Caco-2 (cell line): ENCODE measurements at regions of chr2 and their contacts with region 1.

Region 1: DNA sequence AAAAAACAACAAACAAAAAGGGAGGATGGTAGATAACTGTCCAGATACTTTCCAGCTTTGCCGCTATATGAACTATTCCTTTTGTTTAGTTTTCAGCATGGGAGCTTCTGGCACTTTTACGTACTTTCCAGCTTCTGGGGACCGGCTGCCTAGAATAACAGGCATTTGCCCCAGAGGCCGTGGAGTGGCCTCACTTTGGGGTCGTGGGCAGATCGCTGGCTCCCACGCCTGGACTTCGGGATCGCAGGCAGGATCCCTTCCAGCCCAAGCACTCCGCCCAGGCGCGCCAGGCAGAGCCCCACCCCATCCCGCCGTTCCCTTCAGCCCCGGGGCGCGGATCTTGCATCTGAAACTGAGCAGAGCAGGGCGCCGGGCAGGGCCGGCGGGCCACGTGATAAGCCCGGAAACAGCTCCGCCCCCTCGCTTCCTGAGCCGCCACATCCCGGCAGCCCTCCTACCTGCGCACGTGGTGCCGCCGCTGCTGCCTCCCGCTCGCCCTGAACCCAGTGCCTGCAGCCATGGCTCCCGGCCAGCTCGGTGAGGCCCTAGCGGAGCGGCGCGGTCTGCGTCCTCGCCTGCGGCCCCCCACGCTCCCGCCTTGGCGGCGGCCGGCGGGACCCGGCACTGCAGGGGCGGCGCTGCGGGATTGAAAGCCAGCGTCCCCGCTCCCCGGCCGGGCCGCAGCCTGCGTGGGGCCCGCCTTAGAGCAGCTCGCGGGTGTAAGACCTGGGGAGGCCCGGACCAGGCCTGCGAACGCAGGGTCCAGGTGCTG is at the start of gene ATIC:
- DNase-seq: peak; percentile 97
- H3K4me3 ChIP-seq: peak within 1 kb of the TSS; percentile 57
- H3K4me3 Mint-ChIP-seq: peak within 1 kb of the TSS; percentile 87
- H3K27ac Mint-ChIP-seq: peak within 1 kb of the TSS; percentile 83
- H3K4me1 ChIP-seq: peaks cover 25% of the 10 kb centered on the region
- H3K4me1 Mint-ChIP-seq: peaks cover 23% of the 10 kb centered on the region
- H3K27me3 ChIP-seq: no peaks in the 10 kb centered on the region
- H3K27me3 Mint-ChIP-seq: no peaks in the 10 kb centered on the region
- CTCF ChIP-seq: no peak
- total RNA-seq, gene ATIC: 318 and 325 TPM in 2 replicates

Region 2: DNA sequence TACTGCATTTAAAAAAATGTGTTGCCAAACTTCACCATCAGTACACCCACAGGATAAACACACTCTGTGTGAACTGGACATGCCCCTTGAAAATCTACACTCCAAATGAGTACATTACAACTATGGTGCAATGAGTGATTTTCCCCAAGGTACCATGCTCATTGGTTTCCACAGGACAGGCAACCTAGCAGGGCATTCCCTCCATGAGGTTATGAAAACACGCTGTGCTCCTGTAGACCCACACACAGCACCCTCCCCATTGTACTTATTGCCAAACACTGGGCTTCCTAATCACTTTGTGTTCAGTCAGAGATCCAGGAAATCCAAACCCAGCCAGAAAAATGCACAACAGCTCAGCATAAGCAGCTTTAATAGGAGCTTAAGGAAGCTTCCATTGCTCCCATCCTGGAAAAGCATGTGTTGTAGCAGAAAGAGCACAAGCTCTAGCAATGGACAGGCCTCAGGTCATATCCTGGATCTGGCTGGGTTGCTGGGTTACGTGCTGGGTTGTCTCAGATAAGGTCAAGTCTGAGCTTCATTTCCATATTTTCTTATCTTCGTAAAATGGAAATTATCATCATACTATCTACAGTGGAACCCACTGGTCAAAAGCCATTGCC is 20.7 kb before region 1 on chr2:
- CTCF ChIA-PET with region 1: no interaction called
- POLR2A ChIA-PET with region 1: no interaction called
- intact Hi-C with region 1: no loop called
- DNase-seq: no peak
- H3K4me3 ChIP-seq: no peak overlapping the region
- H3K4me3 Mint-ChIP-seq: no peak overlapping the region
- H3K27ac Mint-ChIP-seq: no peak overlapping the region
- H3K4me1 ChIP-seq: no peaks in the 10 kb centered on the region
- H3K4me1 Mint-ChIP-seq: no peaks in the 10 kb centered on the region
- H3K27me3 ChIP-seq: no peaks in the 10 kb centered on the region
- H3K27me3 Mint-ChIP-seq: no peaks in the 10 kb centered on the region
- CTCF ChIP-seq: no peak

Region 3: GRCh38 chr2:215332872-215333595 is 21.2 kb after region 1 on chr2:
- CTCF ChIA-PET with region 1: interaction called, 4 read pairs
- POLR2A ChIA-PET with region 1: no interaction called
- intact Hi-C with region 1: loop called (anchors 1 kb)
- DNase-seq: peak; percentile 48 to 54
- H3K4me3 ChIP-seq: no peak overlapping the region
- H3K4me3 Mint-ChIP-seq: peak overlapping the region; percentile 6
- H3K27ac Mint-ChIP-seq: peak overlapping the region; percentile 3
- H3K4me1 ChIP-seq: peaks cover 28% of the 10 kb centered on the region
- H3K4me1 Mint-ChIP-seq: peaks cover 23% of the 10 kb centered on the region
- H3K27me3 ChIP-seq: no peaks in the 10 kb centered on the region
- H3K27me3 Mint-ChIP-seq: no peaks in the 10 kb centered on the region
- CTCF ChIP-seq: no peak

Region 4: DNA sequence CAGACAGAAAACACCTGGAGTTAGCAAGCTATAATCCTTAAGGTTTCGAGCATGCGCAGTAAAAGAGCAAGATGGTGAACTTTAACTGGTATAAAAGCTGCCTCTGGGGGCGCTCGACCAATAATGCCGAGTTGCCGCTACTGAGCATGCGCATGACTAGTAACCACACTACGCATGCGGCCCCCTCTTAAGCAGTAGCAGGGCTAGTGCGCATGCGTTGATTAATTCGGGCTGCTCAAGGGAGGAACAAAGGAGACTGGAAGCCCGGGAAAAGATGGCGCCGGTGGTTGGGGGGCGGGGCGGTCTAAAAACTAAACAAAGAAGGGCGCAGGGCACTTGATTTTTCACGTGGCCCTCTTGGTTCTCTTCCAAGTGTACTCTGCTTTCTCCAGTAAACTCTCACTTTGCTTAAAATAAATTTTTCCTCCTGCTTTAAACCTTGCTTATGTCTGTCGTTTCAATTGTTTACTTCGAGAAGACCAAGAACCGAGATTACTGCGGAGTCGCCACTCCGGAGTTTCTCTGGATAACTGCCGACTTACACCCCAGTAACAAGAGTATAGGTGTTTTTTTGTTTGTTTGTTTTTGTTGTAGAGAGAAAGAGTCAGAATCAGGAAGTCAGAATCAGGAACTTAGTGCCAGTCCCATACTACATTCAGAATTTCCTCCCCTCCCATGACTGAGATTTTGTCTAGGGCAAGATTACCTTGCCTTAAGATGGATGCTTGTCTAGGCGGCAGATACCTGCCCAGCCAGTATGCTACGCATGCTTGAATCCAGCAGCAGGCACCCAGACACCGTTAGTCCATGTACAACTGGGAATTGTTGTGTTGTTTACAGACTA is 803.1 kb after region 1 on chr2:
- CTCF ChIA-PET with region 1: no interaction called
- POLR2A ChIA-PET with region 1: no interaction called
- intact Hi-C with region 1: loop called (anchors 5 kb)
- DNase-seq: peak; percentile 98 to 99
- H3K4me3 ChIP-seq: peak overlapping the region; percentile 33
- H3K4me3 Mint-ChIP-seq: peak overlapping the region; percentile 92
- H3K27ac Mint-ChIP-seq: peak overlapping the region; percentile 97
- H3K4me1 ChIP-seq: peaks cover 35% of the 10 kb centered on the region
- H3K4me1 Mint-ChIP-seq: peaks cover 33% of the 10 kb centered on the region
- H3K27me3 ChIP-seq: no peaks in the 10 kb centered on the region
- H3K27me3 Mint-ChIP-seq: no peaks in the 10 kb centered on the region
- CTCF ChIP-seq: peak; percentile 85 to 92